ENCODE measurements at regions of chr2 and their contacts with region 1.

Region 1: DNA sequence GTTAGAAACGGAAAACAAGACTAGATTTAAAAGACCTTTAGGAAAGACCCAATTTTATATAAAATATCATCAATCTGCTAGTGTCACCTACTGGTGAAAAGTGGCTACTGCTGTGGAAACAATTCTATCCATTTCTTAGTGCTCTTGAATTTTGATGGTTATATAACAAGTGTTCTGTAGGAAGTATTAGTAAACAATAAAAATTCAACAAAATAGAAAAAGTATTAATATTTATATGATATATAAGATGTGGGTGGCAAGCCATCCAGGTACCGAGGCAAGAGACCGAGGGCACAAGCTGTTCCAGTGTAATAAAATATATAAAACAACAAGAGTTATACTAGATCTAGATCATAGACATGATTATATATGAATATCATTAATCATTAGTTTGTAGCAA is 6.2 kb upstream of the TMEM87B start:
- H3K4me3 Mint-ChIP-seq: no peak overlapping the region
- H3K27ac Mint-ChIP-seq: no peak overlapping the region
- H3K4me1 Mint-ChIP-seq: peaks cover 27% of the 10 kb centered on the region
- H3K27me3 Mint-ChIP-seq: no peaks in the 10 kb centered on the region

Region 2: DNA sequence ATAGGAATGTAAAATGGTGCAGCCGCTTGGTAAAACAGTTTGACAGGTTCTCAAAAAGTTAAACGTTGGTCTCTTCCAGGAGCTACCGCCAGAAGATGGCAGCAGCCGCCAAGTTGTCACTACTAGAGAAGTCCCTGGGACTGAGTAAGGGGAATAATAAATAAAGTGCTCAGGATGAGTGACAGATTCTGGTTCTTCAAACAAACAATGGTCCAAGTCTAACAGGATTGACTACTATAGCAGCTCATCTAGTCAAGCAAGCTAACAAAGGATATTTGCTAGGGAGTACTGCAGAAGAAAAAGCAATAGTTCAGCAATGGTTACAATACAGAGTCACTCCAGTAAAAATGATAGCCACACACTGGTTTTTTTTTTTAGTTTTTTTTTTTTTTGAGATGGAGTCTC is 161.1 kb before region 1 on chr2:
- intact Hi-C with region 1: loop called (anchors 2 kb)
- H3K4me3 Mint-ChIP-seq: no peak overlapping the region
- H3K27ac Mint-ChIP-seq: no peak overlapping the region
- H3K4me1 Mint-ChIP-seq: peaks cover 9% of the 10 kb centered on the region
- H3K27me3 Mint-ChIP-seq: no peaks in the 10 kb centered on the region

Region 3: DNA sequence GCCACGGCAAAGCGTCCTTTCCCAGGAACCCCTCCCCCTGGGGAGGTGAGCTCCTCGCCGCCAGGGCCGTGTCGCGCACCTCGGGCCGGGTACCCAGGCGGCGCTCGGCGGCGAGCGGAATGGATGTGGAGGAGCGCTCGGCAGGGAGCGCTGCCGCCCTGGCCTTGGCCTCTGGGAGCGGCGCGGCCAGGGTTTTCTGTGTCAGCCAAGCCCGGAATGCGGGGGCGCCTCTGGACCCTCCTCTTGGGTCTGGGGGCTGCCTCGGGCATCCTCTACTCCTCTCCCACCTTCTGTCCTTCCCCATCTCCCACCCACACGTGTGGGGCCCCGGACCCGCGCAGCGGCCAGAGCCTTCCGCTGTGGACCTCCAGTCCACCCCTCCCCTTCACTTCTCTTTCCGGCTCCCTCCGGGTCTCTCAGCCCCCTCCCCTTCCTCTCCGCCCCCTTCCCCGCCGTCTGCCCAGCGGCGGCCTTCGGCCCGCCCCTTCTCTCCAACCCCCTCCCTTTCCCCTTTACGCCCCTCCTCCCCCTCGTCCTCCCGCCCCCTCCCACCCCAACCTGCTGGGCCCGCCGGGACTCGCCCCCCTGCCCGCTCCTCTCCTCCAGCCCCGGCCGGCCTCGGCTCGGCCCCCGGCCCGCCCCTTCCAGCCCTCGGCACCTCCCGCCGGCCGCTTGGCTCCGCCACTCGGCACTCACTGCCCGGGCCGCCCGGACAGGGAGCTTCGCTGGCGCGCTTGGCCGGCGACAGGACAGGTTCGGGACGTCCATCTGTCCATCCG is 150.8 kb before region 1 on chr2 and contains the start of gene MERTK:
- intact Hi-C with region 1: loop called (anchors 2 kb)
- H3K4me3 Mint-ChIP-seq: peak within 1 kb of the TSS; percentile 80
- H3K27ac Mint-ChIP-seq: peak within 1 kb of the TSS; percentile 80
- H3K4me1 Mint-ChIP-seq: peaks cover 39% of the 10 kb centered on the region
- H3K27me3 Mint-ChIP-seq: peaks cover 41% of the 10 kb centered on the region

Region 4: DNA sequence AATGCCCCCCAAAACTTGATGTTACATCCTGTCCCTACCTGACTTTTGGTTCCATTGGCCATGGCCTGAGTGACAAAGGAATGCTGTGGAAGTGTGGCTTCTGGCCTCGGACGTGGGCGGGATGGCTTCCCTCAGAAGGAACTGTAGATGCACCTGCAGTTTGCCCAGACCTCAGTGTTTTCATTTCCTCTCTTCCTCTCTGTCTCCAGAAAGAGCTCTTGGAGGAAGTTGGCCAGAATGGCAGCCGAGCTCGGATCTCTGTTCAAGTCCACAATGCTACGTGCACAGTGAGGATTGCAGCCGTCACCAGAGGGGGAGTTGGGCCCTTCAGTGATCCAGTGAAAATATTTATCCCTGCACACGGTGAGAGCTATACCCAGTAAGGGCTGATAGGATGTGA is 54.8 kb before region 1 on chr2:
- intact Hi-C with region 1: no loop called
- H3K4me3 Mint-ChIP-seq: peak overlapping the region; percentile 4
- H3K27ac Mint-ChIP-seq: peak overlapping the region; percentile 45
- H3K4me1 Mint-ChIP-seq: peaks cover 20% of the 10 kb centered on the region
- H3K27me3 Mint-ChIP-seq: peaks cover 2% of the 10 kb centered on the region

Region 5: GRCh38 chr2:112006076-112006410 is 42.8 kb before region 1 on chr2:
- intact Hi-C with region 1: no loop called
- H3K4me3 Mint-ChIP-seq: no peak overlapping the region
- H3K27ac Mint-ChIP-seq: peak overlapping the region; percentile 37
- H3K4me1 Mint-ChIP-seq: peaks cover 57% of the 10 kb centered on the region
- H3K27me3 Mint-ChIP-seq: peaks cover 3% of the 10 kb centered on the region

Measured in dendritic cell treated with granulocyte-macrophage colony-stimulating factor and Interleukin-4, amounts not matched to agents 40 ng/mL and 50 ng/mL, for 4 days (primary cell).